ENCODE measurements at regions of chr1 and their contacts with region 1.

Region 1: DNA sequence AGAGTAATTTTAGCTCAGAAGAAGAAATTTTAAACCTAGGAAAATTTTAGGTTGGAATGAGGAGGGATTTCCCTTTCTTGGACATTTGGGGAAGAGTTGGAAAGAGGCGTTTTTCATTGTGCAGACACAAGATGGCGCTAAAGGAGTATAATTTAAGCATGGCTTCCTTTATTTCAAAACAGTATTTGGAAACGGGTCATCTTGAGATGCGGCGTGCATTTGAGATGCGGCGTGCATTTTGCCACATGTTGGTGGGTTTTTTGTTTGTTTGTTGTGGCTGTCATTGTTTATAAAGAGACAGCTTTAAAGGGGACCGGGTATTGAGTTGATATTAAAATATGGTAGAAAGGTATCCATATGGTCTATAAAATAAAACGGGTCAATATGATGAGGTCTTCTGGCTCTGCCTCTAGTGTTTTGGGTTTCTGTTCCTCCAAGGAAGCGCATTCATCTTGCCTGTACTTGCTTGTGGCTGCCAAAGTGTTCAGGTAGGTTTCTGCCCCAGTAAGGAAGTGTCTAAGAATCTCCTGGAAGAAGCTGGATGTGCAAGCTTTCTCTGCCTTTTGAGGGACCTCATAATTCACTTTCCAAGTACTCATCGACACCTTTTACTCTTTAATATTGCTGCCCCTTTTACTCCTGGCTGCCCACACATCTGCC is 210.3 kb downstream of the SLC35F3 start:
- DNase-seq: peak; percentile 52 to 69
- ATAC-seq: peak; percentile 66 to 67; a peak in 5 of 6 replicates
- H3K4me3 ChIP-seq: peak overlapping the region; percentile 34
- H3K27ac ChIP-seq: peak overlapping the region; percentile 56 to 78
- H3K4me1 ChIP-seq: peaks cover 25% of the 10 kb centered on the region
- CTCF ChIP-seq: peak; percentile 88
- EP300 ChIP-seq: no peak
- POLR2A ChIP-seq: no peak
- RAD21 ChIP-seq: peak; percentile 84 to 93

Region 2: GRCh38 chr1:233304489-233305102 is 810.2 kb before region 1 on chr1:
- CTCF ChIA-PET with region 1: interaction called, 20 read pairs
- POLR2A ChIA-PET with region 1: no interaction called
- DNase-seq: peak in 1 of 2 experiments; percentile 38
- ATAC-seq: peak in 1 of 2 experiments; percentile 61; a peak in 2 of 6 replicates
- H3K4me3 ChIP-seq: no peak overlapping the region
- H3K27ac ChIP-seq: no peak overlapping the region
- H3K4me1 ChIP-seq: 0 out of 3 replicates have a peak, but pooled peaks cover 3% of the 10 kb centered on the region
- CTCF ChIP-seq: peak; percentile 95
- EP300 ChIP-seq: no peak
- POLR2A ChIP-seq: no peak
- RAD21 ChIP-seq: peak; percentile 91 to 94

Region 3: GRCh38 chr1:233364695-233365539 is 749.9 kb before region 1 on chr1:
- CTCF ChIA-PET with region 1: interaction called, 41 read pairs
- POLR2A ChIA-PET with region 1: no interaction called
- DNase-seq: peak; percentile 21 to 49
- ATAC-seq: peak; percentile 49 to 50; a peak in 4 of 6 replicates
- H3K4me3 ChIP-seq: no peak overlapping the region
- H3K27ac ChIP-seq: peak overlapping the region; percentile 69 to 76
- H3K4me1 ChIP-seq: peaks cover 85% of the 10 kb centered on the region
- CTCF ChIP-seq: peak; percentile 84
- EP300 ChIP-seq: no peak
- POLR2A ChIP-seq: no peak
- RAD21 ChIP-seq: peak; percentile 69 to 83

Region 4: DNA sequence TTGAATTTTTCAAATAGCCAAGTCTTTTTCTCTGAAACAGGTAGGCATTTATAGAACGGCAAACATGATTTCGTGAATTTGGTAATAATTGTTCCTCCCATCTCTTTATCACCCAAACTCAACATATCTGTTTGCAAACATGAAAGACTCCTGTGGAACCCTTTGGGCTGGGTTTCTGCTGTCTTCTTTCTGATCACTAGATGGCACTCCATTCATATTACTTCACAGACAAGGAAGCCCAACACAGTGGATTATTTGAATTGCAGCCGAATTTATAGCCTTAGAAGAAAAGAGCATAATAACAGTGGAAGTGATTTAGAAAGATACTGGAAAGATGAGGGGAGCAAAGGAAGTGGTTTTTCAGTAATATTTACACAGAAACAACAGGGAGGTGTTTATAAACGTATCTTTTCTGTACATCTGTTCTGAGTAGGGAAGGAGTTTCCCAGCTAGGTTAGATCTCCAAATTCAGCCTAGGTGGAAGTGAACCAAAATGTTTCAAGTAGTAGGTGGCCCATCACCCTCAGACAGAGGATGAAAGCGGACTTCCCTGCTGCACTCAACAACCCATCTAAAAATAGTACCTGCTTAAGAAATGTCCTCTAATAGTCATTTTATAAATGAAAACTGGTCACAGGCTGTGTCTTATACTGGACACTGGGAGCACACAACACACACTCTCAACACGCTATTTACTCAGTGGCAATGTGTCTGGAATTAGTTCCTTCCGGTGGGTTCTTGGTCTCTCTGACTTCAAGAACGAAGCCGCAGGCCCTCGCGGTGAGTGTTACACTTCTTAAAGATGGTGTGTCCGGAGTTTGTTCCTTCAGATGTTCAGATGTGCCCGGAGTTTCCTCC is 719.7 kb before region 1 on chr1:
- CTCF ChIA-PET with region 1: interaction called, 22 read pairs
- POLR2A ChIA-PET with region 1: no interaction called
- DNase-seq: peak; percentile 61 to 70
- ATAC-seq: peak; percentile 96 to 97
- H3K4me3 ChIP-seq: no peak overlapping the region
- H3K27ac ChIP-seq: peak overlapping the region in 1 of 2 experiments; percentile 62; a peak in 2 of 6 replicates
- H3K4me1 ChIP-seq: peaks cover 13% of the 10 kb centered on the region
- CTCF ChIP-seq: peak; percentile 92
- EP300 ChIP-seq: no peak
- POLR2A ChIP-seq: no peak
- RAD21 ChIP-seq: peak; percentile 91 to 92

Region 5: GRCh38 chr1:233982827-233983518 is 131.8 kb before region 1 on chr1:
- CTCF ChIA-PET with region 1: no interaction called
- POLR2A ChIA-PET with region 1: no interaction called
- DNase-seq: no peak
- ATAC-seq: no peak
- H3K4me3 ChIP-seq: no peak overlapping the region
- H3K27ac ChIP-seq: no peak overlapping the region
- H3K4me1 ChIP-seq: no peaks in the 10 kb centered on the region
- CTCF ChIP-seq: no peak
- EP300 ChIP-seq: no peak
- POLR2A ChIP-seq: no peak
- RAD21 ChIP-seq: no peak

Region 6: GRCh38 chr1:234040446-234041306 is 74.1 kb before region 1 on chr1:
- CTCF ChIA-PET with region 1: no interaction called
- POLR2A ChIA-PET with region 1: no interaction called
- DNase-seq: no peak
- ATAC-seq: no peak
- H3K4me3 ChIP-seq: no peak overlapping the region
- H3K27ac ChIP-seq: no peak overlapping the region
- H3K4me1 ChIP-seq: no peaks in the 10 kb centered on the region
- CTCF ChIP-seq: no peak
- EP300 ChIP-seq: no peak
- POLR2A ChIP-seq: no peak
- RAD21 ChIP-seq: no peak

Region 7: DNA sequence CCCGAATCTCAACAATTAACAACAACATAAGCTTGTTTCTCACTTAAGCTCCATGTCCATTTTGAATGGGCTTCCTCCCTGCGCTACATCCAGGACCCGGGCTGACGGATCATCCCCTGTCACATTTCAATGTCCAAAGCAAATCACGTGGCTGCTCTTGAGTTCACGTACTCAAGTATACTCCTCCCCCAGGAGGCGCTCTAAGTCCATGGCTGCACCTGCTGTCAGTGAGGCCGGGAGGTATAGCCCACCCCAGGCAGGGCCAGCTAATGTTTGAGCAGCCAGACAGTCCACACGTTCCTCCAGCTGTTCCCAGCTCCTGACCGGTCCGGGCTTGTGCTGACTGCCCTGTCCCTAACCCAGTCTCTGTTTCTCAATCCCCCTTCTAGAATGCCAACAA is 10.5 kb after region 1 on chr1:
- CTCF ChIA-PET with region 1: interaction called, 94 read pairs
- POLR2A ChIA-PET with region 1: no interaction called
- DNase-seq: peak in 1 of 2 experiments; percentile 72
- ATAC-seq: peak; percentile 73 to 94; a peak in 5 of 6 replicates
- H3K4me3 ChIP-seq: no peak overlapping the region
- H3K27ac ChIP-seq: peak overlapping the region in 1 of 2 experiments; percentile 38; a peak in 2 of 6 replicates
- H3K4me1 ChIP-seq: peaks cover 28% of the 10 kb centered on the region
- CTCF ChIP-seq: peak; percentile 44
- EP300 ChIP-seq: no peak
- POLR2A ChIP-seq: no peak
- RAD21 ChIP-seq: peak; percentile 69 to 79

Region 8: GRCh38 chr1:234326497-234327366 is 212.0 kb after region 1 on chr1:
- CTCF ChIA-PET with region 1: interaction called, 35 read pairs
- POLR2A ChIA-PET with region 1: no interaction called
- DNase-seq: peak; percentile 62 to 66
- ATAC-seq: peak; percentile 92 to 95
- H3K4me3 ChIP-seq: 0 out of 3 replicates have a peak overlapping the region, but pooled peaks have one; percentile 24
- H3K27ac ChIP-seq: peak overlapping the region; percentile 21 to 63; a peak in 2 of 6 replicates
- H3K4me1 ChIP-seq: 0 out of 3 replicates have a peak, but pooled peaks cover 5% of the 10 kb centered on the region
- CTCF ChIP-seq: peak; percentile 82
- EP300 ChIP-seq: no peak
- POLR2A ChIP-seq: no peak
- RAD21 ChIP-seq: peak; percentile 71 to 73

Measured in A549 (cell line).